ENCODE measurements at regions of chr7 and their contacts with region 1.

Region 1: GRCh38 chr7:28078036-28078901 is 102.3 kb downstream of the JAZF1 start:
- DNase-seq: no peak

Region 2: DNA sequence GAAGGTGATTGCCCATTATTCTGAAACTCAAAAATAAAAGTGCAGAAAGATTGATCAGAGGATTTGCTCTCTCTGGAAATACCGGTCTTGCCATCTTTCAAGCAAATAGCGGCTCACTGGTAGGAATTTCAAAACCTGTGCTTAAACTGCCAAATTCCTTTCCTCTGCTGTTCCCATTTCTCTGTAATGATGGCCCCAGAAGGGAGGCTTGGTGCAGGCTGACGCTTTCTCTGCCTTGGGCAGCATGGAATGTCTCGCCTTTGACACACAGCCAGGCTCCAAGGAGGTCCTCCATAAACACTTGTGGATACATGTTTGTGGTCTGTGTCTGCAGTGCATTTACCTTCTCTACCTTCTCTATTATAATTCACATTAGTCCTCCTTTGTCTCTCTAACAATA is 562.3 kb before region 1 on chr7:
- intact Hi-C with region 1: no loop called
- DNase-seq: no peak

Region 3: GRCh38 chr7:28041491-28042314 is 36.6 kb before region 1 on chr7:
- intact Hi-C with region 1: loop called in 1 of 2 experiments (anchors 5 kb)
- DNase-seq: no peak